Naive thymus-derived CD4-positive, alpha-beta T cell (primary cell): ENCODE measurements at regions of chr4 and their contacts with region 1.

Region 1: GRCh38 chr4:150242820-150243458 is 164.7 kb downstream of the DCLK2 start:
- DNase-seq: no peak
- ATAC-seq: no peak
- H3K4me3 ChIP-seq: no peak overlapping the region
- H3K4me3 Mint-ChIP-seq: no peak overlapping the region
- H3K27ac ChIP-seq: no peak overlapping the region
- H3K27ac Mint-ChIP-seq: no peak overlapping the region
- H3K4me1 ChIP-seq: no peaks in the 10 kb centered on the region
- H3K4me1 Mint-ChIP-seq: no peaks in the 10 kb centered on the region
- H3K27me3 ChIP-seq: no peaks in the 10 kb centered on the region
- H3K27me3 Mint-ChIP-seq: peaks cover 0 to 17% (median 4%) of the 10 kb centered on the region in 5 donors

Region 2: DNA sequence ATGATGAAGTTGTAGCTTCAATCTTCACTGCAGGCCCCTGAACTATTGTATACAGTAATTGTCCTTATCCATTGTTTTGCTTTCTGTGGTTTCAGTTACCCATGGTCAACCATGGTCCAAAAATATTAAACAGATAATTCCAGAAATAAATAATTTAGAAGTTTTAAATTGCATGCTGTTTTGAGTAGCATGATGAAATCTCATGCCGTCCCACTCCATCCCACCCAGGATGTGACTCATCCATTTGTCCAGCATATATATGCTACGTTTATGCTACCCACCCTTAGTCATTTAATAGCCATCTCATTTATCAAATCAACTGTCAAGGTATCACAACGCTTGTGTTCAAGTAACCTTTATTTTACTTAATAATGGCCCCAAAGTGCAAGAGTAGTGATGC is 461.8 kb before region 1 on chr4:
- CTCF ChIA-PET with region 1: no interaction called
- POLR2A ChIA-PET with region 1: no interaction called
- intact Hi-C with region 1: no loop called
- DNase-seq: no peak
- ATAC-seq: no peak
- H3K4me3 ChIP-seq: no peak overlapping the region
- H3K4me3 Mint-ChIP-seq: no peak overlapping the region
- H3K27ac ChIP-seq: no peak overlapping the region
- H3K27ac Mint-ChIP-seq: no peak overlapping the region
- H3K4me1 ChIP-seq: no peaks in the 10 kb centered on the region
- H3K4me1 Mint-ChIP-seq: no peaks in the 10 kb centered on the region
- H3K27me3 ChIP-seq: no peaks in the 10 kb centered on the region
- H3K27me3 Mint-ChIP-seq: no peaks in the 10 kb centered on the region

Region 3: GRCh38 chr4:149980941-149981340 is 262.0 kb before region 1 on chr4:
- CTCF ChIA-PET with region 1: no interaction called
- POLR2A ChIA-PET with region 1: no interaction called
- intact Hi-C with region 1: loop called in 1 of 2 experiments (anchors 1 kb)
- DNase-seq: peak in 6 of 9 donors; percentile 25 to 33 (median 28)
- ATAC-seq: peak; percentile 57
- H3K4me3 ChIP-seq: no peak overlapping the region
- H3K4me3 Mint-ChIP-seq: no peak overlapping the region
- H3K27ac ChIP-seq: no peak overlapping the region
- H3K27ac Mint-ChIP-seq: no peak overlapping the region
- H3K4me1 ChIP-seq: no peaks in the 10 kb centered on the region
- H3K4me1 Mint-ChIP-seq: peaks cover 0 to 12% (median 0%) of the 10 kb centered on the region in 7 donors
- H3K27me3 ChIP-seq: no peaks in the 10 kb centered on the region
- H3K27me3 Mint-ChIP-seq: peaks cover 0 to 12% (median 8%) of the 10 kb centered on the region in 5 donors

Region 4: GRCh38 chr4:149999485-150000074 is 243.4 kb before region 1 on chr4:
- CTCF ChIA-PET with region 1: no interaction called
- POLR2A ChIA-PET with region 1: no interaction called
- intact Hi-C with region 1: loop called in 1 of 2 experiments (anchors 5 kb)
- DNase-seq: no peak
- ATAC-seq: no peak
- H3K4me3 ChIP-seq: no peak overlapping the region
- H3K4me3 Mint-ChIP-seq: no peak overlapping the region
- H3K27ac ChIP-seq: no peak overlapping the region
- H3K27ac Mint-ChIP-seq: no peak overlapping the region
- H3K4me1 ChIP-seq: no peaks in the 10 kb centered on the region
- H3K4me1 Mint-ChIP-seq: peaks cover 0 to 5% (median 0%) of the 10 kb centered on the region in 7 donors
- H3K27me3 ChIP-seq: no peaks in the 10 kb centered on the region
- H3K27me3 Mint-ChIP-seq: peaks cover 5 to 18% (median 16%) of the 10 kb centered on the region in 5 donors